SK-N-SH (cell line): ENCODE measurements at regions of chr2 and their contacts with region 1.

Region 1: GRCh38 chr2:186862869-186863709 is 14.1 kb upstream of the ZSWIM2 start:
- DNase-seq: peak; percentile 34
- H3K4me3 ChIP-seq: no peak overlapping the region; a peak in 1 of 4 replicates
- H3K27ac ChIP-seq: no peak overlapping the region
- H3K4me1 ChIP-seq: peaks cover 0 to 7% of the 10 kb centered on the region in 2 experiments; a peak in 2 of 4 replicates
- H3K27me3 ChIP-seq: no peaks in the 10 kb centered on the region
- CTCF ChIP-seq: peak; percentile 84
- EP300 ChIP-seq: no peak
- RAD21 ChIP-seq: peak; percentile 93

Region 2: DNA sequence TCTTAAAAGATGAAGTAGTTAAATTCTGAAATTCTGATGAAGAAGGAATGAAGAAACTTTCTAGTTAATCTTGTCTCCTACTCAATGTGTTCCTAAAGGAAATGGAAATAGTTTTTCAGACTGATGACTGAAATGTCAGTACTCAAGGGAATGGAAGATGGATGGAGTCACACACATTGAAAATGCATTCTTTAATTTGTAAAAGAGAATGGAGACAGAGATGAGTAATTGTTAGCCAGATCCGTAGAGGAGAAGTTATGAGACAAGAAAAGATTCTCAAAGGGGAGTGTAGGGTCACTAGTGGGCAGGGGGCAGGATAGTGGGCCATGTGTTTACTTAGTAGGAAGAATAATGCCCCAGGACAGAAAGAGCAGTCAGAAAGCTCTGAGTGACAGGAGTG is 27.5 kb before region 1 on chr2:
- CTCF ChIA-PET with region 1: no interaction called
- POLR2A ChIA-PET with region 1: no interaction called
- DNase-seq: no peak
- H3K4me3 ChIP-seq: no peak overlapping the region
- H3K27ac ChIP-seq: no peak overlapping the region
- H3K4me1 ChIP-seq: no peaks in the 10 kb centered on the region
- H3K27me3 ChIP-seq: no peaks in the 10 kb centered on the region
- CTCF ChIP-seq: no peak
- EP300 ChIP-seq: no peak
- RAD21 ChIP-seq: no peak

Region 3: DNA sequence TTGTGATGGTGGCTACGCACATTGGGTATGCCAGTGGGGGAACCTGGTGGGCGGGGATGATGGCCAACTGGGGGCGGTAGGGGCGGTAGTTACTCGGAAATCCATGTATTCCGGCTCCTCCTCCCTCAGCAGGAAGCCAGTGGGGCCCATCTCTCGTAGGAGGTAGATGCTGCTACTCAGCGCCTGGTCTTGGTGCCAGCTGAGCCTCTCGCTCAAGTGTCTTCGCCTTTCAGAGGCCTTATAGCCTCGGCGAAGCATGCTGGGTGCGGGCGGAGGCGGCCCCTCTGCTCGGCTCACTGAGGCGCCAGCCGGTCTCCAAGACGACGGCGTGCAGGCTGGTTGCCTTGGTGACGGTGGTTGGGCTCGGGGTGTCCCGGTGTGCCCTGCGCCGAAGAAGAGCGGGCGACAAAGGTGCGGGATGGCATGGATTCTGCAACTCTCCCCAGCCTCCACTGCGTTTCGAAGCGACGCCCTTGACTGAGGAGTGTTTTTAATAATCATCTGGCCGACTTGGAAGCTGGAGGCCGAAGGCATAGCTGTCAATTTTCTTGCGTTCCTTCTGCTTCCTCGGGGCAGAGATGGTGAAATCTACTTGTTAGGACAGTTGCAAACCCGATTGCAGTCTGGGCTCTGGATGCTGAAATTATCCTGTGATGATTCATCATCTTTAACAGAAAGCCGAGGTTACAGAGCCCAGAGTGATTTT is 14.1 kb before region 1 on chr2 and contains the start of gene ZSWIM2:
- CTCF ChIA-PET with region 1: interaction called, 29 read pairs
- POLR2A ChIA-PET with region 1: no interaction called
- DNase-seq: peak; percentile 78
- H3K4me3 ChIP-seq: peak within 1 kb of the TSS; percentile 54 to 66
- H3K27ac ChIP-seq: peak within 1 kb of the TSS; percentile 79 to 87
- H3K4me1 ChIP-seq: peaks cover 0 to 9% of the 10 kb centered on the region in 2 experiments; a peak in 2 of 4 replicates
- H3K27me3 ChIP-seq: no peaks in the 10 kb centered on the region
- CTCF ChIP-seq: no peak
- EP300 ChIP-seq: peak in 1 of 2 experiments; percentile 40; a peak in 1 of 4 replicates
- RAD21 ChIP-seq: no peak
- polyA plus RNA-seq, gene ZSWIM2: 0.05 and 0.06 TPM in 2 replicates

Region 4: DNA sequence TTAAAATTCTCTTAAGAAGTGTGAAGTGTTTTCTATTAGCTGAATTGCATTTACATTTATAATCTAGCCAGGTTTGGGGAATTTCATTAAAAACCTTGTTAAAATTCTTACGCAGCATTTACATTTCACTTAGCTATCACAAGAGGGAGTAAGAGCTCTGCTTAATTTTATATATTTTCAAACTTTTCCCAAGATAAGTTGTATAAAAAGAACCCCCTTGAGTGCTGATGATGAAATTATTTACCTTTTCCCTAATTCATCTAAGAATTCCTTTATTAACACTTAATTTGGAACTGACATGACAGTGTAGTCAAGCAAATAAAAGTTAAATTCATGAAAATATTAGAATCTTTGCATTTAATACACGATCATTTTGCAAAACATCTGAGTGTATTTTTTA is 40.1 kb after region 1 on chr2:
- CTCF ChIA-PET with region 1: interaction called, 10 read pairs
- POLR2A ChIA-PET with region 1: no interaction called
- DNase-seq: peak; percentile 3
- H3K4me3 ChIP-seq: no peak overlapping the region
- H3K27ac ChIP-seq: no peak overlapping the region
- H3K4me1 ChIP-seq: no peaks in the 10 kb centered on the region; a peak in 1 of 4 replicates
- H3K27me3 ChIP-seq: no peaks in the 10 kb centered on the region
- CTCF ChIP-seq: peak; percentile 70
- EP300 ChIP-seq: no peak
- RAD21 ChIP-seq: peak; percentile 61

Region 5: GRCh38 chr2:187447336-187447735 is 584.2 kb after region 1 on chr2:
- CTCF ChIA-PET with region 1: interaction called, 41 read pairs
- POLR2A ChIA-PET with region 1: no interaction called
- DNase-seq: no peak
- H3K4me3 ChIP-seq: no peak overlapping the region
- H3K27ac ChIP-seq: no peak overlapping the region
- H3K4me1 ChIP-seq: peaks cover 0 to 6% of the 10 kb centered on the region in 2 experiments; a peak in 2 of 4 replicates
- H3K27me3 ChIP-seq: no peaks in the 10 kb centered on the region
- CTCF ChIP-seq: no peak
- EP300 ChIP-seq: no peak
- RAD21 ChIP-seq: no peak

Region 6: GRCh38 chr2:187453078-187453641 is 590.1 kb after region 1 on chr2:
- CTCF ChIA-PET with region 1: interaction called, 41 read pairs
- POLR2A ChIA-PET with region 1: no interaction called
- DNase-seq: peak; percentile 6
- H3K4me3 ChIP-seq: no peak overlapping the region
- H3K27ac ChIP-seq: no peak overlapping the region
- H3K4me1 ChIP-seq: peaks cover 0 to 5% of the 10 kb centered on the region in 2 experiments; a peak in 1 of 4 replicates
- H3K27me3 ChIP-seq: no peaks in the 10 kb centered on the region
- CTCF ChIP-seq: peak; percentile 73
- EP300 ChIP-seq: no peak
- RAD21 ChIP-seq: peak; percentile 90